Spleen (tissue), 13 donors: ENCODE measurements at regions of chr2 and their contacts with region 1.

Region 1: GRCh38 chr2:216683846-216684507 is 11.4 kb downstream of the IGFBP5 start:
- DNase-seq: no peak
- H3K4me3 ChIP-seq: no peak overlapping the region
- H3K27ac ChIP-seq: no peak overlapping the region
- H3K4me1 ChIP-seq: peaks cover 0 to 25% (median 2%) of the 10 kb centered on the region in 6 donors
- H3K27me3 ChIP-seq: peaks cover 0 to 63% (median 0%) of the 10 kb centered on the region in 7 donors
- CTCF ChIP-seq: no peak
- POLR2A ChIP-seq: no peak

Region 2: GRCh38 chr2:216897561-216898203 is 213.7 kb after region 1 on chr2:
- intact Hi-C with region 1: no loop called
- DNase-seq: no peak
- H3K4me3 ChIP-seq: no peak overlapping the region
- H3K27ac ChIP-seq: peak overlapping the region in 1 of 8 donors; percentile 16
- H3K4me1 ChIP-seq: no peaks in the 10 kb centered on the region
- H3K27me3 ChIP-seq: no peaks in the 10 kb centered on the region
- CTCF ChIP-seq: no peak
- POLR2A ChIP-seq: no peak

Region 3: DNA sequence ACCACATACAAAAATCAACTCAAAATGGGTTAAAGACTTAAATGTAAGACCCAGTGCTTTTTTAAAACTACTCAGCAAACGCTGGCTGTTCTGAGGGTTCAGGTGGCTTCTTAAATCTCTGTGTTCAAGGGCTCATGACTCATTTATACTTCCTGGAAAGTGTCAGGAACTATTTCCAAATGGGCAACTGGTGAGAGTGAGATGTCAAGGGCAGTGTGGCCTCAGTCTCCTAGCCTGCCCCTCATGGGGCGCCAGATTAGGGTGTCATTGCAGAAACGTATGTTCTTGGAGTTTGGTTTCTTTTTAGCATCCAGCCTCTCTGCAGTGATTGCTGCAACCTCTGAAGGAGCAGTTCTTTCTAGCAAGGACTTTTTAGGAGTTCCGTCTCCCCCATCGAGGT is 833.4 kb after region 1 on chr2:
- intact Hi-C with region 1: loop called (anchors 5 kb)
- DNase-seq: no peak
- H3K4me3 ChIP-seq: no peak overlapping the region
- H3K27ac ChIP-seq: peak overlapping the region in 1 of 8 donors; percentile 22
- H3K4me1 ChIP-seq: peaks cover 0 to 11% (median 4%) of the 10 kb centered on the region in 6 donors
- H3K27me3 ChIP-seq: no peaks in the 10 kb centered on the region
- CTCF ChIP-seq: no peak
- POLR2A ChIP-seq: no peak

Region 4: DNA sequence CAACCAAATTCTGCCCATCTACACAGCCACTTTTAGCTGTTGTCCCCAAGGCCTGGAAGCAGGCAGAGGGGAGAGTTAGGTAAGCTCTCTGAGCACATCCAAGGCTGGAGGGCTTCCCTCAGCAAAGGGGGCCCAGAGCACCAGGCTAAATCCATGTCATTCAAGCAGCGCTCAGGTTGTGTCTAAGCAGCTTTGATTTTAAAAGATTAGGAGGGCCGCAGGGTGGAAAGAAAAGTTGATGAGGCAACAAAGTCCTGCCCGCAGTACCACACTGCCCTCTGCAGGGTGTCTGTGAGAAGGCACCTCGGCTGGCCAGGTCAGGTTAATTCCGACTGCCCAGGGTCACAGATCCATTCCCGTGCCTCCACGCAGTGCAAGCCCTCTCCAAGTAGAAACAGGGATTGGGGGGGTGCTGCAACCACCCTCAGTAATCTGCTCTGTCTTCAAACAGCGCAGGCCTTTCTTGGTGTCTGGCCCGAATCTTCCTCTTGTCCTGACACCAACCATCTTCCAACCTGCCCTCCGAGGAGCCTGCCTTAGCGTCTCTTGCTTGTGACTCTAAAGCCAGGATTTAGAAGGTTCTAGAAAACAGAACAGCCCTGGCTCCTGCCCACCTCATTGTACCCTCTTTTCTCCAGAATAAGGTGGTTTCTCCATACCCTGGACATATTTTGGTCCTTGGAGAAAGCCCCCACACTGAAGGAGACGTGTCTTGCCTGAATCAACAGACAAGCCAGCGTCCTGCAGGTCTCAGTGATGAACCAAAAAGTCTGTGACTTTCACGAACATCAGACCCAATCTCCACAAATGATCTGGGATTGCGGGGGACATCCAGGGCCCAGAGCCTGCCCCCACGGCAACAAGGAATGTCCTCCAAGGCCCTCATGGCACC is 1029.7 kb after region 1 on chr2:
- intact Hi-C with region 1: loop called (anchors 2 kb)
- DNase-seq: peak; percentile 90
- H3K4me3 ChIP-seq: no peak overlapping the region
- H3K27ac ChIP-seq: peak overlapping the region in 4 of 8 donors; percentile 4 to 26 (median 11)
- H3K4me1 ChIP-seq: peaks cover 2 to 25% (median 16%) of the 10 kb centered on the region in 6 donors
- H3K27me3 ChIP-seq: peaks cover 0 to 18% (median 0%) of the 10 kb centered on the region in 7 donors
- CTCF ChIP-seq: peak; percentile 71 to 95 (median 90)
- POLR2A ChIP-seq: no peak